CD4-positive, alpha-beta memory T cell (primary cell): ENCODE measurements at regions of chr19 and their contacts with region 1.

Region 1: GRCh38 chr19:35748106-35749020 is at the start of gene LIN37:
- DNase-seq: peak; percentile 98 to 100 (median 99)
- H3K4me3 ChIP-seq: peak within 1 kb of the TSS; percentile 63 to 93
- H3K4me3 Mint-ChIP-seq: peak within 1 kb of the TSS; percentile 97 to 99 (median 98)
- H3K27ac ChIP-seq: peak within 1 kb of the TSS; percentile 82
- H3K27ac Mint-ChIP-seq: peak within 1 kb of the TSS; percentile 88 to 98 (median 97)
- H3K4me1 ChIP-seq: peaks cover 42% of the 10 kb centered on the region
- H3K4me1 Mint-ChIP-seq: peaks cover 25 to 49% (median 39%) of the 10 kb centered on the region in 4 donors
- H3K27me3 ChIP-seq: no peaks in the 10 kb centered on the region
- H3K27me3 Mint-ChIP-seq: no peaks in the 10 kb centered on the region
- total RNA-seq, gene LIN37: 26.3 to 29.4 TPM

Region 2: DNA sequence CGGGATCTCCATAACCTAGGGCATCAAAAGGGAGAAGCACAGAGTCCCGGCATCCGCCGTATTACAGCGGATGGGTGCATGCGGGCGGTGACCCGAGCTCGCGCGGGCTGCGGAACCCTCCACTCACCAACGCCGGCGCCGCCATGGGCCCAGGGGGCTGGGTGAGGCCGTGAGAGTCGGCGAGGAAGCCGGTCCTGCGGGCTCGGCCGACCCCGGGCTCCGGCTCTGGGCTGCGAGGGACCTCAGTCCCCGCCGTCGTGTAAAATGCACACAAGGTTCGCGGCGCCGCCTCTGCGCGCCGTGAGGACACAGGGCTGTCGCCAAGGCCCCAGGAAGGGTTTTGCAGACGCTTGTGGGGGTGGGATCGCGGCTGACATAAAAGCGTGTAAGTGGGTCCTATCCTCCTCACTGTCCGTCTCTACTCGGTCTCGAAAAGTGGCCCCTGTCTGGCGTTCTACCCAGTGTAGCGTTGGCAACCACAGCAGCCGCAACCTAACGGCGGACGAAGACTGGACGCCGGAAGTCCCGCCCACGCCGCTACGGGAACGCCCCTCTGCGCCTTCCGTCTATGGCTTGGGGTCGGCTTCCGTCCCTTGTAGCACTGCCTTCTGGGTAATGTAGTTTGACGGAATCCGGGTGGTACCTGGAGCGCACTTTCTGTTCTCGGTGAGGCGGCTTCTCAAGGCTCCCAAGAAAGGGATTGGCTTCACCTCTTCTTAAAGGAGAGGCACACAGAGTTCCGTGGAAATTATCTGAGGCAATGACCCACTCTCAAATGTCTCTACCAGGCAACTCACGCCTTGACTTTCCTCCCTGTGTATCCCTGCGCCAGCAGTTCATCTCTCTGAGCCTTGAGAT is 975.4 kb before region 1 on chr19 and contains the start of gene ZNF599:
- CTCF ChIA-PET with region 1: no interaction called
- POLR2A ChIA-PET with region 1: no interaction called
- intact Hi-C with region 1: loop called (anchors 5 kb)
- DNase-seq: peak; percentile 87 to 89 (median 88)
- H3K4me3 ChIP-seq: peak within 1 kb of the TSS; percentile 55 to 93
- H3K4me3 Mint-ChIP-seq: peak within 1 kb of the TSS; percentile 93 to 98 (median 97)
- H3K27ac ChIP-seq: peak within 1 kb of the TSS; percentile 68
- H3K27ac Mint-ChIP-seq: peak within 1 kb of the TSS; percentile 86 to 98 (median 97)
- H3K4me1 ChIP-seq: peaks cover 9% of the 10 kb centered on the region
- H3K4me1 Mint-ChIP-seq: peaks cover 13 to 23% (median 19%) of the 10 kb centered on the region in 4 donors
- H3K27me3 ChIP-seq: no peaks in the 10 kb centered on the region
- H3K27me3 Mint-ChIP-seq: peaks cover 0 to 4% of the 10 kb centered on the region in 2 donors
- total RNA-seq, gene ZNF599: 10.6 to 10.7 TPM

Region 3: DNA sequence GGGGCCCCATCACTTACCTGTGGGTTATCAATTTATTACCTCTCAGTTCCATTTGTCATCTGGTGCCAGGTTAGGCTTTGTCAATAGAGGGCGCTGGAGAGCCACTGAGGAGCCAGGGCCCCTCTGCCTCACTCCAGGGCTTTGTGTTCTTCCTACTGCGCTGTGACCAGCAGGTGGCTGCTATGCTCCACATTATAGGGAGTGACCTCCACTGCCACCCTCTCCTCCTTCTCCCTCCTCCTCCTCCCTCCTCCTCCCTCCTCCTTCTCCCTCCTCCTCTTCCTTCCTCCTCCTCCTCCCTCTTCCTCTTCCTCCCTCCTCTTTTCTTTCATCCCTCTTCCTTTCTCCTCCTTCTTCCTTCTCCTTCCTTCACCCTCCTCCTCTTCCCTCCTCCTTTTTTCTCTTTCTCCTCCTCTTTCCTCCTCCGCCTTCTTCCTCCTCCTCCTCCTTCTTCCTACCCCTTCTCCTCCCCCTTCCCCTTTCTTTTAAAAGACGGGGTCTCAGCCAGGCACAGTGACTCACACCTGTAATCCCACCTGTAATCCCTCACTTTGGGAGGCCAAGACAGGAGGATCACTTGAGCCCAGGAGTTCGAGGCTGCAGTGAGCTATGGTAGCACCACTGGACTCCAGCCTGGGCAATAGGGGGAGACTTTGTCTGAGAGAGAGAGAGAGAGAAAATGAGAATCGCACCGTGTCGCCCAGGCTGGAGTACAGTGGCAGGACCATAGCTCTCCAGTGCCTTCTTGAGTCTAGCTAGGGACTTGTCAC is 54.3 kb before region 1 on chr19:
- CTCF ChIA-PET with region 1: interaction called, 6 read pairs
- POLR2A ChIA-PET with region 1: interaction called, 3 read pairs
- intact Hi-C with region 1: loop called (anchors 2 kb)
- DNase-seq: peak; percentile 87 to 89 (median 88)
- H3K4me3 ChIP-seq: no peak overlapping the region
- H3K4me3 Mint-ChIP-seq: peak overlapping the region in 1 of 8 donors; percentile 57
- H3K27ac ChIP-seq: no peak overlapping the region
- H3K27ac Mint-ChIP-seq: peak overlapping the region in 6 of 7 donors; percentile 4 to 75 (median 28)
- H3K4me1 ChIP-seq: no peaks in the 10 kb centered on the region
- H3K4me1 Mint-ChIP-seq: peaks cover 0 to 5% (median 2%) of the 10 kb centered on the region in 4 donors
- H3K27me3 ChIP-seq: no peaks in the 10 kb centered on the region
- H3K27me3 Mint-ChIP-seq: no peaks in the 10 kb centered on the region

Region 4: GRCh38 chr19:35775298-35776110 is 27.1 kb after region 1 on chr19 and contains the start of gene ARHGAP33:
- CTCF ChIA-PET with region 1: interaction called, 4 read pairs
- POLR2A ChIA-PET with region 1: interaction called, 3 read pairs
- intact Hi-C with region 1: loop called (anchors 1 kb)
- DNase-seq: peak; percentile 97 to 98 (median 98)
- H3K4me3 ChIP-seq: peak within 1 kb of the TSS; percentile 21 to 65
- H3K4me3 Mint-ChIP-seq: peak within 1 kb of the TSS; percentile 79 to 95 (median 87)
- H3K27ac ChIP-seq: no peak within 1 kb of the TSS
- H3K27ac Mint-ChIP-seq: peak within 1 kb of the TSS; percentile 46 to 87 (median 72)
- H3K4me1 ChIP-seq: peaks cover 15% of the 10 kb centered on the region
- H3K4me1 Mint-ChIP-seq: peaks cover 11 to 37% (median 20%) of the 10 kb centered on the region in 4 donors
- H3K27me3 ChIP-seq: no peaks in the 10 kb centered on the region
- H3K27me3 Mint-ChIP-seq: no peaks in the 10 kb centered on the region
- total RNA-seq, gene ARHGAP33: 15.8 to 19.4 TPM

Region 5: GRCh38 chr19:35833972-35834371 is 85.6 kb after region 1 on chr19:
- CTCF ChIA-PET with region 1: no interaction called
- POLR2A ChIA-PET with region 1: no interaction called
- intact Hi-C with region 1: no loop called
- DNase-seq: no peak
- H3K4me3 ChIP-seq: no peak overlapping the region
- H3K4me3 Mint-ChIP-seq: no peak overlapping the region
- H3K27ac ChIP-seq: no peak overlapping the region
- H3K27ac Mint-ChIP-seq: no peak overlapping the region
- H3K4me1 ChIP-seq: no peaks in the 10 kb centered on the region
- H3K4me1 Mint-ChIP-seq: no peaks in the 10 kb centered on the region
- H3K27me3 ChIP-seq: peaks cover 2% of the 10 kb centered on the region
- H3K27me3 Mint-ChIP-seq: peaks cover 19 to 24% of the 10 kb centered on the region in 2 donors

Region 6: DNA sequence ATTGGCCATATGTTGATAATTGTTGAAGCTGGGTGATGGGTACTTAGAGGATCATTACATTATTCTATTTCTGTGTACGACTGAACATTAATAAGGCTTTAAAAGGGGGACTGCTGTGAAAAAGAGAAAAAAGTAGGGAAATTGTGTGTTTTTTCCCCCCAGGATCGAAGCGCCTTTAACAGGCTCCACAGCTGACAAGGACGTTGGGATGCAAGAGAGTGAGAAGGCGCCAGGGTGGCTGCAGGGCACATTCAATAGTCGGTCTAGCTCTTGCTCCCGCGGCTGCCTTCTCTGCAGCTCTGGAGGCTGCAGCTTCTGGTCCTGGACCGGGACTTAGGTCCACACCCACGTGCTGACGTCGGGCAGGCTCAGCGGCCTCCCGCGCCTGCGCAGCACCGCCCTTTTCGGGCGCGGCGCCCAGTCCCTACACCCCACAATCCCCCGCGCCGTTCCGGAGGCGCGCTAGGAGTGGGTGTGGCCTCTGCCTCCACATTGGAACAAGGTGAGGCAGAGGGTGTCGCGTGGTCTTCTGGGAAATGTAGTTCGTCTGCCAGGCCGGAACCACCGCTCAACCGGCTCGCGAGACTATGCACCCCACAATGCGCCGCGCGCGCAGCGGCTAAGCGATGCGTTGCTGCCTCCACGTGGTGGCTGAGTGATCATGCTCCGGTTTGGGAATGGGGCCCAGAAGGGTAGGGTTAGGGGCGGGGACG is 183.0 kb after region 1 on chr19:
- CTCF ChIA-PET with region 1: no interaction called
- POLR2A ChIA-PET with region 1: interaction called, 4 read pairs
- intact Hi-C with region 1: loop called (anchors 1 kb)
- DNase-seq: peak; percentile 99 to 100 (median 100)
- H3K4me3 ChIP-seq: peak overlapping the region in 1 of 2 donors; percentile 49
- H3K4me3 Mint-ChIP-seq: peak overlapping the region; percentile 76 to 85 (median 80)
- H3K27ac ChIP-seq: peak overlapping the region; percentile 54
- H3K27ac Mint-ChIP-seq: peak overlapping the region; percentile 86 to 97 (median 95)
- H3K4me1 ChIP-seq: peaks cover 47% of the 10 kb centered on the region
- H3K4me1 Mint-ChIP-seq: peaks cover 27 to 62% (median 38%) of the 10 kb centered on the region in 4 donors
- H3K27me3 ChIP-seq: no peaks in the 10 kb centered on the region
- H3K27me3 Mint-ChIP-seq: no peaks in the 10 kb centered on the region

Region 7: GRCh38 chr19:35966771-35967170 is 218.4 kb after region 1 on chr19:
- CTCF ChIA-PET with region 1: no interaction called
- POLR2A ChIA-PET with region 1: no interaction called
- intact Hi-C with region 1: no loop called
- DNase-seq: no peak
- H3K4me3 ChIP-seq: no peak overlapping the region
- H3K4me3 Mint-ChIP-seq: no peak overlapping the region
- H3K27ac ChIP-seq: no peak overlapping the region
- H3K27ac Mint-ChIP-seq: no peak overlapping the region
- H3K4me1 ChIP-seq: no peaks in the 10 kb centered on the region
- H3K4me1 Mint-ChIP-seq: peaks cover 2 to 12% (median 6%) of the 10 kb centered on the region in 4 donors
- H3K27me3 ChIP-seq: no peaks in the 10 kb centered on the region
- H3K27me3 Mint-ChIP-seq: peaks cover 1 to 3% of the 10 kb centered on the region in 2 donors